Right cardiac atrium (tissue), 5 donors: ENCODE measurements at regions of chr1 and their contacts with region 1.

Region 1: DNA sequence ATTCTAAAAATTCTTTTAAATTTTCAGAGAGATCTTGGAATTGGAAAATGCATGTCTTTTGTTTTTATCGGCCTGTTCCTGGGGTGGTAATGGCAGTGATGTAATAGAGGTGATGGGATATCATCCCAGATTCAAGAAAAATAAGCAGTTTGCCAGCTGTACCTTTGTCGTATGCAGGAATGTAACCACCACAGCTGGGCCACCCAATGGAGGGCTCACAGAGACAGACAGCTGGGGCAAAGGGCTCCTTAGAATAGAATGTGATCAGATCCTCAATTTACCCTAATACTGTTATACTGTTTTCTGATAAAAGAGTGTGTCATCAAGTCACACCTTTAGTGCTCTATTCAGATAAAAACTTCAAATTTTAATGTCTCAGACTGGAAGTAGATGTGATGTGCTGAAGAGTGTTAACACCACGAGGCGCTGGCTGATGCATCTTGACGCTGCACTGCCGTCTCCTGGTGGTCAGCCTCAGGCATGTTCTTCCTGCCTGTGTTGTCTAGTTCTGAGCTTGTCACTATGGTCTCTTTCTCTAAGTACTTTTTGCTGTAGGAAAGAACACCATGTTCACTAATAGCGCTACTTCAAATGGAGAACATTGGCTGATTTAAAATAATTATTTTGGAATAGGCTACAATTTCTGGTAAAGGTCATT is 78.8 kb downstream of the C1orf21 start:
- DNase-seq: peak; percentile 36 to 70 (median 69)
- ATAC-seq: peak; percentile 80 to 82
- H3K4me3 ChIP-seq: no peak overlapping the region
- H3K27ac ChIP-seq: no peak overlapping the region
- H3K4me1 ChIP-seq: peaks cover 12% of the 10 kb centered on the region
- H3K27me3 ChIP-seq: no peaks in the 10 kb centered on the region

Region 2: GRCh38 chr1:184386312-184387068 is 79.1 kb before region 1 on chr1 and contains the start of gene C1orf21:
- intact Hi-C with region 1: loop called in 2 of 4 experiments (anchors 5 to 10 kb)
- DNase-seq: peak; percentile 93 to 97 (median 96)
- ATAC-seq: peak; percentile 97 to 98
- H3K4me3 ChIP-seq: peak within 1 kb of the TSS; percentile 88
- H3K27ac ChIP-seq: peak within 1 kb of the TSS; percentile 95
- H3K4me1 ChIP-seq: peaks cover 2% of the 10 kb centered on the region
- H3K27me3 ChIP-seq: no peaks in the 10 kb centered on the region
- total RNA-seq, gene C1orf21: 70.4 to 93.5 (median 78.9) TPM